Thyroid gland (tissue), 4 donors: ENCODE measurements at regions of chr19 and their contacts with region 1.

Region 1: DNA sequence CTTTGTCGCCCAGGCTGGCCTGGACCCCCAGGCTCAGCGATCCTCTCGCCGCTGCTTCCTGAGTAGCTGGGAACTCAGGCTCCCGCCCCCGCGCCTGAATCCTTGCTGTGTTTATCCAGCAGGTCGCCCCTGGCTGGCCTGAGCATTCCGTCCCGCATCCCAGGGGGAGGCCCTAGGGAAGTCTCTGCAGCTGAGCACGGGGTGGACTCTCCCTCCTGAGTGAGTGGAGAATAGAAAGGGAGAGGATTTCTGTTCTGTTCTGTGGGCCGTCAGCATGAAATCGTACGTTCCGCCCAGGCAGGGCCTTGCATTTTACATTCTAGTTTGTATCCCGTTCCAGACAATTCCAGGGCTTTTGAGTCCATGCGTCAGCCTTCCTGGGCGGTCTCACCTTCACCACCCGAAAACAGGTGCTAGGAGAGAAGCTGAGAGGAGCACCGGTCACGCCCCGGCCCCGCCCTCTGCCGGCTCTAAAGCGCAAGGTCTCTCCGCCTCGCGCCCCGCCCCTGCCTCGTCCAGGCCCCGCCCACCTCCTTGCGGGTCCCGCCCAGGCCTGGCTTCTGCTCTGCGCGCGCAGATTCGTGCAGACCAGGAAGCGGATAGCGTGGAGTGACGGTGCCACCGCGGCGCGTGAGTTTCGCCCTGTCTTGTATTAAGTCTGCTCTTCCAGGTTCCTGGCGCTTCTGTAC is at the start of gene ZNF761:
- DNase-seq: peak; percentile 98
- H3K4me3 ChIP-seq: peak within 1 kb of the TSS; percentile 20 to 66 (median 52)
- H3K27ac ChIP-seq: peak within 1 kb of the TSS; percentile 39 to 95 (median 69)
- H3K4me1 ChIP-seq: peaks cover 5 to 8% of the 10 kb centered on the region in 2 donors
- H3K27me3 ChIP-seq: no peaks in the 10 kb centered on the region
- CTCF ChIP-seq: peak in 3 of 6 experiments; percentile 20 to 43 (median 25)
- POLR2A ChIP-seq: peak in 1 of 2 donors; percentile 80
- total RNA-seq, gene ZNF761: 11.8 to 15.2 (median 12.6) TPM

Region 2: GRCh38 chr19:53394974-53395839 is 36.3 kb before region 1 on chr19 and contains the start of gene ZNF765:
- intact Hi-C with region 1: loop called (anchors 5 kb)
- DNase-seq: peak; percentile 94 to 96
- H3K4me3 ChIP-seq: peak within 1 kb of the TSS; percentile 23 to 89 (median 47)
- H3K27ac ChIP-seq: peak within 1 kb of the TSS; percentile 34 to 44 (median 41)
- H3K4me1 ChIP-seq: peaks cover 0 to 16% of the 10 kb centered on the region in 2 donors
- H3K27me3 ChIP-seq: no peaks in the 10 kb centered on the region
- CTCF ChIP-seq: peak in 3 of 6 experiments; percentile 31 to 57 (median 49)
- POLR2A ChIP-seq: peak; percentile 13 to 73
- total RNA-seq, gene ZNF765: 10.4 to 16.9 (median 12.5) TPM

Region 3: DNA sequence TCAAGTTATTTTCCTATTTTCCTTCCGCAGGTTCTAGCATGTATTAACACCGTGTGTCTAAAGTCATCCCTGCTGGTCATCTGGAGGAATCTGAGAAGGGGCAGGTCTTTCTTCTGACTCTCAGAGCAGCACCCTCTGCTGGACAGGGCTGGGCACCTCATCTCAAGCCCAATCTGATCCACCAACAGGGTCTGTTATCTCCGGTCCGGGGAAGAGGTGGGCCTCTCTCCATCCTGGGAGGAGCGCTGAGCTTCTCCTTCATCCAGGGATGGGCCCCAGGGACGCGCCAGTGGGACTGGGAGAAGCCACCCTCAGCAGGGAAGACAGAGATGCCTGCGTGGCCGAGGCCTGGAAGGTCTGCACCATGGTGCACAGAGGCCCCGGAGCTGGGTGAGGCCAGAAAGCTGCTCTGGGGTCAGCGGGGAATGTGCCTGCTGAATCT is 80.4 kb after region 1 on chr19:
- intact Hi-C with region 1: loop called (anchors 10 kb)
- DNase-seq: peak; percentile 70 to 71
- H3K4me3 ChIP-seq: no peak overlapping the region
- H3K27ac ChIP-seq: no peak overlapping the region
- H3K4me1 ChIP-seq: no peaks in the 10 kb centered on the region
- H3K27me3 ChIP-seq: no peaks in the 10 kb centered on the region
- CTCF ChIP-seq: peak; percentile 27 to 73 (median 62)
- POLR2A ChIP-seq: no peak

Region 4: GRCh38 chr19:53597023-53597422 is 165.5 kb after region 1 on chr19:
- intact Hi-C with region 1: no loop called
- DNase-seq: peak; percentile 3 to 6
- H3K4me3 ChIP-seq: no peak overlapping the region
- H3K27ac ChIP-seq: no peak overlapping the region
- H3K4me1 ChIP-seq: peaks cover 0 to 11% of the 10 kb centered on the region in 2 donors
- H3K27me3 ChIP-seq: no peaks in the 10 kb centered on the region
- CTCF ChIP-seq: no peak
- POLR2A ChIP-seq: no peak